Tibial artery (tissue), 4 donors: ENCODE measurements at regions of chr9 and their contacts with region 1.

Region 1: GRCh38 chr9:134067904-134068743 is at the start of gene BRD3:
- DNase-seq: peak; percentile 84 to 91
- H3K4me3 ChIP-seq: peak within 1 kb of the TSS; percentile 88 to 95
- H3K27ac ChIP-seq: peak within 1 kb of the TSS; percentile 91 to 95
- H3K4me1 ChIP-seq: peaks cover 0 to 39% (median 27%) of the 10 kb centered on the region in 4 donors
- H3K27me3 ChIP-seq: peaks cover 0 to 26% of the 10 kb centered on the region in 2 donors
- CTCF ChIP-seq: no peak

Region 2: GRCh38 chr9:132833550-132834121 is 1234.5 kb before region 1 on chr9:
- intact Hi-C with region 1: no loop called
- DNase-seq: peak in 1 of 2 donors; percentile 41
- H3K4me3 ChIP-seq: no peak overlapping the region
- H3K27ac ChIP-seq: no peak overlapping the region
- H3K4me1 ChIP-seq: no peaks in the 10 kb centered on the region
- H3K27me3 ChIP-seq: peaks cover 0 to 9% of the 10 kb centered on the region in 2 donors
- CTCF ChIP-seq: no peak

Region 3: GRCh38 chr9:134024828-134025605 is 43.1 kb before region 1 on chr9 and contains the start of gene BRD3OS:
- intact Hi-C with region 1: loop called (anchors 5 kb)
- DNase-seq: peak; percentile 95 to 98
- H3K4me3 ChIP-seq: peak within 1 kb of the TSS; percentile 95
- H3K27ac ChIP-seq: peak within 1 kb of the TSS; percentile 81
- H3K4me1 ChIP-seq: peaks cover 0 to 14% (median 10%) of the 10 kb centered on the region in 4 donors
- H3K27me3 ChIP-seq: no peaks in the 10 kb centered on the region
- CTCF ChIP-seq: no peak

Region 4: DNA sequence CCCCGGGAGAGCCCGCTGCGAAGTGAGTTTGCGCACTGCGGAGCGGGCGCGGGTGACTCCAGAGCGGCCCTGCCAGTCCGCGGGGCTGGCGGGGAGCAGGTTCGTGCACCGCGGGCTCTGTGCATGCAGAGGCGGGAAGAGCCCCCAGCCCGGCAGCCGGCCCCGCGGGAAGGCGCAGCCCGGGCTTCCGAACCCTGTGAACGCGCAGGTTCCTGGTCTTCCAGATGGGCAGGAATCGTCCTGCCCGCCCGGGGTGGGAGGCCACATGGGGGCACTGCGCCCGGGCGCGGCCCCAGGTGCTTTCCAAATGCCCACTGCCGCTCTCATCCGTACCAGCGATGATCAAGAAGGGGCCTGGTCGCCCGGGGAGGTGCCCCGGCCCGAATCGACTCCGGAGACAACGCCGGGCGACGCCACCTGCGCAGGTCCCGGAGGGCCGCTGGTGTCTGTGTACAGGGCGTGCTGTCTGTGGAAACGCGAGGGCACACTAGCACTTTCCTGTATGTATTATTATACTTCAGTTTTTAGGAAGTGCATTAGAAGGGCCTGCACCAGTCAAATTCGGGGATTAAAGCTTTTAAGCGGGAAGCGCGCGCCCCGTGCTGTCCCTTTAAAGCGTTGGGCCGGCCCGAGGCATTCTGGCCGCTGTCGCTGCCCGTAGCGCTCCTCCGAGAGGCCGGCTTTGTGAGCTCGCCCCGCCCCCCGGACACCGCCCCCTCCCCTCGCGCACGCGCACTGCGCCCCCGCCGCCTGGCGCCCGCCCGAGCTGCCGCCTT is 67.4 kb after region 1 on chr9 and contains the start of gene WDR5:
- intact Hi-C with region 1: loop called (anchors 5 kb)
- DNase-seq: peak; percentile 90 to 94
- H3K4me3 ChIP-seq: peak within 1 kb of the TSS; percentile 74 to 80
- H3K27ac ChIP-seq: peak within 1 kb of the TSS; percentile 88 to 94
- H3K4me1 ChIP-seq: peaks cover 0 to 55% (median 44%) of the 10 kb centered on the region in 4 donors
- H3K27me3 ChIP-seq: no peaks in the 10 kb centered on the region
- CTCF ChIP-seq: no peak